ENCODE measurements at regions of chr2 and their contacts with region 1.

Region 1: DNA sequence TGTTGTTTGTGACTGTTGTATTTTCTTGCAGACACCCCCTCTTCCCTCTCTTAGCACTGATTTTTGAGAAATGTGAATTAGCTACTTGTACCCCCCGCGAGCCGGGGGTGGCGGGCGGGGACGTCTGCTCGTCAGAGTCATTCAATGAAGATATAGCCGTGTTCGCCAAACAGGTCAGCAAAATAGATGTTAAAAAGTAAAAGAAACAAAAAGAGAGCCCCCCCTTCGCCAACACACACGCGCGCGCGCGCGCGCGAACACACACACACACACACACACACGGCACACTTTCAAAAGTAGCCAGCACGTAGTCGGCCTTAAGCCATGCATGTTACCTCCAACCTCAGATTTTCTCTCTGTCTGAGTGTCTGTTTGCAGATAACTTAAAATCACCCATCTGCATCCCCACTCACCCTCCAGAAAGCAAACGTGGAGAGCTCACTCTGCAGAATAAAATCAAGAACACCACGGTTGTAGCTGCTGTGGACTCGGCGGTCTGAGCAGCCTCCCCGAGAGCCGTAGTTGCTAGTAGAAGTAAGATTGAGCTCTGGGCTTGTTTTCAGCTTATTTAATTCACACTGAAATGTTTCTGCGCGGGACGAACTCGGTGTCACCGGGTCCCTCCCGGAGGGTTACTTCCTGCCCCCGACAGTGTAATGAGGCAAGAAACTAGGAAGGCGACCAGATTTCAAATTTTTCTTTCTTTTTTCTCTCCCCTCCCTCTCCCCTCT is 5.1 kb downstream of the MEIS1 start:
- DNase-seq: peak in 1 of 2 donors; percentile 17
- ATAC-seq: peak in 6 of 8 donors; percentile 1 to 23 (median 15)
- H3K4me3 ChIP-seq: peak overlapping the region; percentile 6 to 87 (median 78)
- H3K27ac ChIP-seq: peak overlapping the region; percentile 74 to 95 (median 90)
- H3K4me1 ChIP-seq: peaks cover 0 to 27% (median 15%) of the 10 kb centered on the region in 9 donors
- H3K27me3 ChIP-seq: peaks cover 0 to 98% (median 0%) of the 10 kb centered on the region in 7 donors
- CTCF ChIP-seq: no peak

Region 2: DNA sequence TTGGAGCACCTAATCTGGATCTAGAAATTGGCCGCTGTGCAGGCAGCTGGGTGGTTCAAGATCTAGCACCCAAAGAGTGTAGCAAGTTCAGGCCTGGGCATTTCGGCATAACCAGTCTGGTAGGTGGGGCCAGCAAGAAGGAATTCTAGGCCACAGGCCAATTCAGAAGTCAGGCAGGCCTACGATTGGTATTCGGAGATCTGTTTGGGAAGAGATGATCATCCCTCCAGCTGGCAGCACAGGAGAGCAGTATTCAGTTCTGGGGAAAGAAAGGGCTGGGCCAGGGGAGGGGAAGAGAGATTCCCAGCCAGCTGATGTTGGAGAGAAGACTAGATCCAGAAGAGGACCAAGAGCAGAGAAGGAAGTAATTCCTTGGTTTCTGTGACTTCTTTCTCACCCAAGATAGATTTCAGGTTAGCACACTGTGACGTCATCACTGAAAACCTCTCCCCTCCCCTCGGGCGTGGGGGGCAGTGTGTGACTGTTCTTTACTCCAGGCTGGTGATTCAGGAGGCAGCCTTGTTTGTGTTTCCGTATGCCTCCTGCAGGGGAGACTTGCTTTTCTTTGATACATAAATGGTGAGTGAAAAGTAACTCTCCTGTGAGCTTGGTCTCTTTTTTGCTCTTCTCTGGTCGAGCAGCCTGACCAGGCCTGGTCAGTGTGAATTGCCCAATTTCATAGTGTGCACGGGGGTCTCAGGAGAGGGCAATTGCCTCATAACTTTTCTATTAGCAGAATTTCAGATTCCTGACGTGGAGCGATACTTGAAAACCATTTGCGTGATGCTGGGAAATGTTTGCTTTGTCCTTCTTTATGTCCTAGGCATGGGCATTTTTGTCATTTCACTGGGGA is 56.0 kb after region 1 on chr2:
- intact Hi-C with region 1: loop called in 5 of 10 experiments (anchors 5 to 10 kb)
- DNase-seq: peak in 1 of 2 donors; percentile 44
- ATAC-seq: peak; percentile 44 to 84 (median 79)
- H3K4me3 ChIP-seq: no peak overlapping the region
- H3K27ac ChIP-seq: peak overlapping the region in 9 of 10 donors; percentile 11 to 74 (median 69)
- H3K4me1 ChIP-seq: peaks cover 3 to 54% (median 34%) of the 10 kb centered on the region in 9 donors
- H3K27me3 ChIP-seq: no peaks in the 10 kb centered on the region
- CTCF ChIP-seq: peak in 4 of 9 donors; percentile 6 to 38 (median 30)

Region 3: DNA sequence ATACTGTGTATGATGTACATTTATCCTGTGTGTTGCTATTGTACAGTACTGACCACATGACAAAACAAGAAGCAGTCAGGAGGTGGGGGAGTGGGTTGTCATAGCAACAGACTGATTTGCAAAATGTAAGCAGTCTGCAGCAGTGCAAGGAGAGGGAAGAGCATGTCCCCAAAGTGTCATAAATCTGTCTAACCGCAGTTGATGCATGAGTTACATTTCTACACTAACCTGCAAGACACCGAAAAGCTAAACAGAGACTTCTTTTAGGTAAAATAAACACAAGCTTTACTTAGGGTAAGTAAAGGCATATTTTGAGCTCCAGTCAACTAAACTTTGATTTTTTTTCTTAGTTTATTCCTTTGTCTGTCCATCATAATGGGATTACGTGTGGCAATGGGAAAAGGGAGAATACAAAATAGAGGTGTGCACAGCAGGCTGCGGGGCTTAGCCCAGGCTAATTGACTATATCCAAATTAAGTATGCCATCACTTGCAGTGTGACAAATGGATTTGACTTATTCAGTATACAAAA is 129.4 kb after region 1 on chr2:
- intact Hi-C with region 1: loop called in 5 of 10 experiments (anchors 2 to 5 kb)
- DNase-seq: no peak
- ATAC-seq: no peak
- H3K4me3 ChIP-seq: no peak overlapping the region
- H3K27ac ChIP-seq: no peak overlapping the region
- H3K4me1 ChIP-seq: peaks cover 0 to 25% (median 0%) of the 10 kb centered on the region in 9 donors
- H3K27me3 ChIP-seq: peaks cover 0 to 18% (median 0%) of the 10 kb centered on the region in 7 donors
- CTCF ChIP-seq: no peak